CD8-positive, alpha-beta T cell (primary cell): ENCODE measurements at regions of chr3 and their contacts with region 1.

Region 1: GRCh38 chr3:187112934-187113793 is 26.1 kb downstream of the RPL39L start:
- DNase-seq: peak in 2 of 9 experiments; percentile 61 to 70
- ATAC-seq: peak; percentile 58
- H3K4me3 ChIP-seq: no peak overlapping the region
- H3K4me3 Mint-ChIP-seq: no peak overlapping the region
- H3K27ac ChIP-seq: no peak overlapping the region
- H3K27ac Mint-ChIP-seq: no peak overlapping the region
- H3K4me1 ChIP-seq: no peaks in the 10 kb centered on the region
- H3K4me1 Mint-ChIP-seq: peaks cover 7% of the 10 kb centered on the region
- H3K27me3 ChIP-seq: no peaks in the 10 kb centered on the region
- H3K27me3 Mint-ChIP-seq: no peaks in the 10 kb centered on the region
- CTCF ChIP-seq: peak; percentile 81

Region 2: DNA sequence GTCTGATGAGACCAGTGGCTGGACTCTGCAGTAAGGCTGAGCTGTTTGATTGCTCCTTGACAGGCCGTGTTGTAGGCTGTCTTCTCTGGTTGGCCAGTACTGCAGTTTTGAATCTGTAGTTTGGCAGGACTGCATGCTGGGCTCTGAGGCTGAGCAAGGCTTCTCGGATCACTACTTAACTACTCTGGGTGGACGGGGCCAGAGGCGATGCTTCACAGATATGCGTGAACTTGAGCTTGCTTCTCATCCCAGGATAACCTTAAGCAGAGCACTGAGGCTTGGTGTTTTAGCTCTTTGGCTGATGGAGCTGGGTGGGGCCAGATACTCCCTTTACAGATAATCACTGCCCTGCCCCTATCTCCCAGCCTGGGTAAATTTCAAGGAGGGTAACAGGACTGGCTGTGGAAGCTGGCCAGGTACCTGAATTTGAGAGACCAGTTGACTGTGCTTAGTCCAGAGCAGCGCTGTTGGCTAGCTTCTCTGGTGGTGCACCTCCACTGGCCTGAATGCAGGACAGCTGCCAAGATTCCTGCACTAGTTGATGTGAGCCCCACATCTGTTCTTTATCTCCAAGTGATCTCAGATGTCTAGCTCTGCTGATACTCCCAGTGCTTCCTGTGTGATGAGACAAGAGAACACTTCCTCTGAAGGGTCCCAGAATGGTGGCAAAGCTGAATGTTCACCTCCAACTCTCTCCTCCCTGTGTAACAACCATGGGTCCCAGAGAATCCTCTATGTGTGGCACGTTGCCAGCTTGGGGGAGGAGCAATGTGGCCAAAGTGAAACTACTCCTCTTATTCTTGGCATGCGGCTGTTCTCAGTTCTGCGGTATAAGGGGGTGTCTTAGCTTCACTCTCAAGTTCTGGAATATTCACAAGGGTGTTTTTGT is 11.7 kb before region 1 on chr3:
- CTCF ChIA-PET with region 1: interaction called, 17 read pairs
- POLR2A ChIA-PET with region 1: no interaction called
- intact Hi-C with region 1: no loop called
- DNase-seq: peak; percentile 25 to 74 (median 55)
- ATAC-seq: peak; percentile 71
- H3K4me3 ChIP-seq: peak overlapping the region in 1 of 2 experiments; percentile 27
- H3K4me3 Mint-ChIP-seq: peak overlapping the region; percentile 54
- H3K27ac ChIP-seq: peak overlapping the region in 1 of 2 experiments; percentile 44
- H3K27ac Mint-ChIP-seq: peak overlapping the region; percentile 63
- H3K4me1 ChIP-seq: peaks cover 16% of the 10 kb centered on the region
- H3K4me1 Mint-ChIP-seq: peaks cover 19% of the 10 kb centered on the region
- H3K27me3 ChIP-seq: no peaks in the 10 kb centered on the region
- H3K27me3 Mint-ChIP-seq: no peaks in the 10 kb centered on the region
- CTCF ChIP-seq: no peak

Region 3: DNA sequence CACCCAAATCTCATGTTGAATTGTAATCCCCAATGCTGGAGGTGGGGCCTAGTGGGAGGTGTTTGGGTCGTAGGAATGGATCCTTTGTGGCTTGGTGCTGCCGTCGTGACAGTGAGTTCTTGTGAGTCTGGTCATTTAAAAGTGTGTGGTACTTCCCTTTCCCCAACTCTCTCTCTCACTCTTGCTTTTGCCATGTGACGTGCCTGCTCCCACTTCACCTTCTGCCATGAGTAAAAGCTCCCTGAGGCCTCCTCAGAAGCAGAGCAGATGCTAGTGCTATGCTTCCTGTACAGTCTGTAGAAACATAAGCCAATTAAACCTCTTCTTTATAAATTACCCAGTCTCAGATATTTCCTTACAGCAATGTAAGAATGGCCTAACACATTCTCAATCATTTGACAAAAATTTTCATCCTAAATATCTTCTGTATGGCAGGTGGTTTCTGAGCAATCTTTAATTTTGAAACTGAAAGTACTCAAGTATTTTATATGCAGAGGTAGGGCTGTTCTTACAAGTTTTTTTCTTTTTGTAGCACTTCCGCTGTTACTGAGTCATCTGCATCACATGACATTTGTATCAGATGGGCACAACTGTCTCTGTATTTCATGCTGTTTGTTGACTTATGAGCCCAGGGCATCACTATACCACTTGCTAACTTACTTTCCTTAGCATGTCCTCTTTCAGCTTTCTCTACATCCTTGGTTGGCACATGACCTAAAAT is 17.3 kb after region 1 on chr3:
- CTCF ChIA-PET with region 1: interaction called, 27 read pairs
- POLR2A ChIA-PET with region 1: interaction called, 3 read pairs
- intact Hi-C with region 1: no loop called
- DNase-seq: peak in 6 of 9 experiments; percentile 17 to 92 (median 36)
- ATAC-seq: peak; percentile 95
- H3K4me3 ChIP-seq: no peak overlapping the region
- H3K4me3 Mint-ChIP-seq: peak overlapping the region; percentile 51
- H3K27ac ChIP-seq: peak overlapping the region; percentile 38 to 95
- H3K27ac Mint-ChIP-seq: peak overlapping the region; percentile 96
- H3K4me1 ChIP-seq: peaks cover 17% of the 10 kb centered on the region
- H3K4me1 Mint-ChIP-seq: peaks cover 34% of the 10 kb centered on the region
- H3K27me3 ChIP-seq: no peaks in the 10 kb centered on the region
- H3K27me3 Mint-ChIP-seq: no peaks in the 10 kb centered on the region
- CTCF ChIP-seq: no peak

Region 4: DNA sequence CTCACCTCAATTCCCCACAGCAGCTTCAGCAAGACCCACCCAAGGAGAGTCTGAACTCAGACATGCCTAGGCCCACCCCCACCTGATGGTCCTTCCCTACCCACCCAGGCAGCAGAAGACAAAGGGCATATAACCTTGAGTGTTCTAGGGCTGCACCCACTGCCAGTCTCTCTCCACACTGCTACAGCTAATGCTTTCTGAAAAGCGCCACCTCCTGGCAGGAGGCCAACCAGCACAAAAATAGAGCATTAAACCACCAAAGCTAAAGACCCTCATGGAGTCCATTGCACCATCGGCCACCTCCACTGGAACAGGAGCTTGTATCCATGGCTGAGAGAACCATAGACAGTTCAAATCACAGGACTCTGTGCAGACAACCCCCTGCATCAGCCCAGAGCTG is 37.4 kb after region 1 on chr3:
- CTCF ChIA-PET with region 1: interaction called, 112 read pairs
- POLR2A ChIA-PET with region 1: no interaction called
- intact Hi-C with region 1: loop called (anchors 1 to 2 kb)
- DNase-seq: peak; percentile 37 to 80 (median 65)
- ATAC-seq: peak; percentile 56
- H3K4me3 ChIP-seq: no peak overlapping the region
- H3K4me3 Mint-ChIP-seq: no peak overlapping the region
- H3K27ac ChIP-seq: no peak overlapping the region
- H3K27ac Mint-ChIP-seq: no peak overlapping the region
- H3K4me1 ChIP-seq: no peaks in the 10 kb centered on the region
- H3K4me1 Mint-ChIP-seq: peaks cover 9% of the 10 kb centered on the region
- H3K27me3 ChIP-seq: no peaks in the 10 kb centered on the region
- H3K27me3 Mint-ChIP-seq: no peaks in the 10 kb centered on the region
- CTCF ChIP-seq: peak; percentile 39